IMR-90 (cell line): ENCODE measurements at regions of chr15 and their contacts with region 1.

Region 1: DNA sequence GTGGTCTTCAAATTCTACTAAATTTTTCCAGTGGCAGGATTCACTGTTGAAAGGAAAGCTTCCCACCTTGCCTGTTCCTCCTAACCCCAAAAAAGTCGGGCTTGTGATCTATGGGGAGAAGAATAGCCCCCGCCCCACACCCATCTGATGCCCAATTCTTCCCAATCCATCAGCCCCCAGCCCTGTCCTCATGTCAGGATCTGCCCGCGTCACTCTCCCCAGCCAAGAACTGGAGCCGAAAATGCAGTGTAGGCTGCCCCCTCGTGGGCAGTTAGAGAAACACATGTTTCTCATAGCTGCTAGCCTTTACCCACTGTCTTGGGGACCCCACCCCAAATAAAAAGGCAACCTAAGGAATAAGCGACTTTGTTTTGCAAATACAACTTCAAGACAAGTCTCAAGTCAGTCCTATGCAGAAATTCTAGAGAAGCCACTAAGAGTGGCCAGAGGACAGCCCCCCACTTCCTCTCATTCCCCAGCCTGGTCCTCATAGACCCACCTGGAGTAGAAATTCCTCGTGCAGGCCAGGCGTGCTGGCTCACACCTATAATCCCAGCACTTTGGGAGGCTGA is 13.0 kb upstream of the CSK start:
- DNase-seq: peak; percentile 41
- ATAC-seq: peak; percentile 83
- H3K4me3 ChIP-seq: no peak overlapping the region
- H3K27ac ChIP-seq: no peak overlapping the region
- H3K4me1 ChIP-seq: no peaks in the 10 kb centered on the region
- H3K27me3 ChIP-seq: peaks cover 13% of the 10 kb centered on the region; the same call in 1 of the 2 replicates
- CTCF ChIP-seq: peak; percentile 75
- POLR2A ChIP-seq: no peak
- RAD21 ChIP-seq: peak; percentile 83

Region 2: DNA sequence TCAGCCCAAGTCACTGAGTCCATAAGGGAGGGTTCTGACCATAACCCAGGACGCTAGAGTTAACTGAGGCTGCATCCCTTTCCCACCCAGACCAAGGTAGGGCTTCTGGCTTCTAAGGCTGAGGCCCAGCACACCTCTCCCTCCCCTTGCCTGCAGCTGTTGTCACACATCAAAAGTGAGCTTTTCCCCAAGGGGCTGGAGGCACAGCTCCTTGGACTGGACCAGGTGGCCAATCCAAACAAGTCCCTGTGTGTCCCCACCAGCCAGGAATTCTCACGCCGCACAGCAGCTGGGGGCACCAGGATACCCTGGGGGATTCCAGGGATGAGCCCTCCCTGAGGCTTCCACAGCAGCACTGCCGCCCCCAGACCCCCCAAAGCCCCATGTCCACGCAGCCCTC is 660.7 kb before region 1 on chr15:
- CTCF ChIA-PET with region 1: no interaction called
- POLR2A ChIA-PET with region 1: no interaction called
- dilution Hi-C with region 1: no loop called
- in situ Hi-C with region 1: no loop called
- intact Hi-C with region 1: no loop called
- DNase-seq: no peak
- ATAC-seq: no peak
- H3K4me3 ChIP-seq: no peak overlapping the region
- H3K27ac ChIP-seq: no peak overlapping the region
- H3K4me1 ChIP-seq: no peaks in the 10 kb centered on the region
- H3K27me3 ChIP-seq: peaks cover 10% of the 10 kb centered on the region
- CTCF ChIP-seq: no peak
- POLR2A ChIP-seq: no peak
- RAD21 ChIP-seq: no peak

Region 3: DNA sequence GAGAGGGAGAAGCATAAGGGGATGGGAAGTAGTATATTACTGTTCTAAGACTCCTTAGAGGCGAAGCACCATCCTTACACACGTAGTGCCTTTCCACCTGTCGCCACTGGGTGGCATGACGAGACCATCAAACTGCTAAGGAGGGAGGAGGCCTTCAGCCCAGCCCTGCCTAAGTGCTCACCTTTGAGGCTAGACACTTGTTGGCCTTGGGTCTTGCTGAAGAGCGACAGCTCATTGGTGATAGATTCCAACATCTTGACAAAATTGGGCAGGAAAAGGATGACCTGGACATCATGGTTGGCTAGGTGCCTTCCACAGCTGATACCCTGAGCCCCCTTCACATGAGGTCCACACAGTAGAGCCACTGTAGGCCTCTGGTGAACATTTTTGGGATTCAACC is 133.6 kb before region 1 on chr15:
- CTCF ChIA-PET with region 1: interaction called, 21 read pairs
- POLR2A ChIA-PET with region 1: no interaction called
- dilution Hi-C with region 1: no loop called
- in situ Hi-C with region 1: loop called (anchors 5 kb)
- intact Hi-C with region 1: loop called (anchors 1 kb)
- DNase-seq: peak; percentile 61
- ATAC-seq: peak; percentile 85
- H3K4me3 ChIP-seq: no peak overlapping the region
- H3K27ac ChIP-seq: no peak overlapping the region
- H3K4me1 ChIP-seq: no peaks in the 10 kb centered on the region
- H3K27me3 ChIP-seq: no peaks in the 10 kb centered on the region
- CTCF ChIP-seq: peak; percentile 82
- POLR2A ChIP-seq: no peak
- RAD21 ChIP-seq: peak; percentile 90

Region 4: GRCh38 chr15:74835307-74835823 is 66.5 kb after region 1 on chr15:
- CTCF ChIA-PET with region 1: interaction called, 5 read pairs
- POLR2A ChIA-PET with region 1: no interaction called
- dilution Hi-C with region 1: no loop called
- in situ Hi-C with region 1: no loop called
- intact Hi-C with region 1: loop called (anchors 1 kb)
- DNase-seq: peak; percentile 36
- ATAC-seq: peak; percentile 90
- H3K4me3 ChIP-seq: no peak overlapping the region
- H3K27ac ChIP-seq: no peak overlapping the region
- H3K4me1 ChIP-seq: no peaks in the 10 kb centered on the region
- H3K27me3 ChIP-seq: no peaks in the 10 kb centered on the region; the same call in 1 of the 2 replicates
- CTCF ChIP-seq: peak; percentile 73
- POLR2A ChIP-seq: no peak
- RAD21 ChIP-seq: peak; percentile 65

Region 5: GRCh38 chr15:74906446-74907162 is 137.7 kb after region 1 on chr15 and contains the start of gene FAM219B:
- CTCF ChIA-PET with region 1: interaction called, 6 read pairs
- POLR2A ChIA-PET with region 1: no interaction called
- dilution Hi-C with region 1: no loop called
- in situ Hi-C with region 1: no loop called
- intact Hi-C with region 1: loop called (anchors 1 kb)
- DNase-seq: peak; percentile 83
- ATAC-seq: peak; percentile 93
- H3K4me3 ChIP-seq: peak within 1 kb of the TSS; percentile 89
- H3K27ac ChIP-seq: peak within 1 kb of the TSS; percentile 90
- H3K4me1 ChIP-seq: peaks cover 11% of the 10 kb centered on the region
- H3K27me3 ChIP-seq: no peaks in the 10 kb centered on the region
- CTCF ChIP-seq: no peak
- POLR2A ChIP-seq: peak; percentile 92
- RAD21 ChIP-seq: no peak
- total RNA-seq, gene FAM219B: 20.3 and 24.9 TPM in 2 replicates